ENCODE measurements at regions of chr11 and their contacts with region 1.

Region 1: DNA sequence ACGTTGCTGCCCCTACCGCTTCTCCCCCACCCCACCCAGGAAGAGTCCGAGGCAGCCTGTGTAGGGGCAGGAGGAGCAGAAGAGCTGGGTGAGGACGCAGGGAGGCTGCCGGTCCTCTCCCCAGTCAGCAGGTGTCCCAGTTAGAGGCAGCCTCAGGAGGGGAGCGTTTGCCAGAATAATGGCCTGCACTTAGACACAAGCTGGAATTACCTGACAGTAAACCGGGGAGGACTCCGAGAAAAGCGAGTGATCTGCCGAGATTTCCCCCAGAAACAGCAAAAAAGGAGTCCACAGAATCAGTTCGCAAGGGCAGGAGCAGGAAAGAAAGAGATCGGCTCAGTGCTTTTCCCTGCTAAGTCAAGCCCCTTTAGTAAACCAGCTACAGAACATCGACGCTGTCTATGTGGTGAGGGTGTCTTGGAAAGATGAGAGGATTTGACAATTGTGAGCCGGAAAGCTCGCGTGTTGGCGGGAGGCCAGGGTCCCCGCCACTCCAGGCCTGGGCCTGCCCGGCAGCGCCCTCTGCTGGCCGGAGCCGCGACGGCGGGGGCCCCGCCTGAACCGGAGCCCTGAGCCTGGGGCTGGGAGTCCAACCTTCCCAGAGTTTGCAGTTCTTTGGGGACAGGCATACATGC is 17.7 kb upstream of the THRSP start:
- DNase-seq: peak; percentile 78 to 88
- ATAC-seq: peak; percentile 89 to 96 (median 94)
- H3K4me3 ChIP-seq: peak overlapping the region in 9 of 10 donors; percentile 42 to 63 (median 58)
- H3K27ac ChIP-seq: peak overlapping the region in 9 of 10 donors; percentile 25 to 72 (median 53)
- H3K4me1 ChIP-seq: peaks cover 0 to 17% (median 8%) of the 10 kb centered on the region in 9 donors
- H3K27me3 ChIP-seq: no peaks in the 10 kb centered on the region
- CTCF ChIP-seq: peak; percentile 99

Region 2: DNA sequence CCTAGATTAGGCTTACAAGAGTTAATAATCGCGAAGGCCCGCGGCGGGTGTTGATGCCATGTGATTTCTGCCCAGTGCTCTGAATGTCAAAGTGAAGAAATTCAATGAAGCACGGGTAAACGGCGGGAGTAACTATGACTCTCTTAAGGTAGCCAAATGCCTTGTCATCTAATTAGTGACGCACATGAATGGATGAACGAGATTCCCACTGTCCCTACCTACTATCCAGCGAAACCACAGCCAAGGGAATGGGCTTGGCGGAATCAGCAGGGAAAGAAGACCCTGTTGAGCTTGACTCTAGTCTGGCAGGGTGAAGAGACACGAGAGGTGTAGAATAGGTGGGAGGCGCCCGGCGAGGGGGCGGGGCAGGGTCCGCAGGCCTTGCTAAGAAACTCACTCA is 159.6 kb before region 1 on chr11:
- intact Hi-C with region 1: no loop called
- DNase-seq: no peak
- ATAC-seq: no peak
- H3K4me3 ChIP-seq: no peak overlapping the region
- H3K27ac ChIP-seq: no peak overlapping the region
- H3K4me1 ChIP-seq: peaks cover 0 to 4% (median 0%) of the 10 kb centered on the region in 9 donors
- H3K27me3 ChIP-seq: no peaks in the 10 kb centered on the region
- CTCF ChIP-seq: no peak

Region 3: GRCh38 chr11:77994412-77995362 is 51.3 kb before region 1 on chr11 and contains the start of gene INTS4:
- intact Hi-C with region 1: loop called in 3 of 10 experiments (anchors 1 to 10 kb)
- DNase-seq: peak; percentile 99
- ATAC-seq: peak; percentile 98 to 99 (median 99)
- H3K4me3 ChIP-seq: peak within 1 kb of the TSS; percentile 52 to 79 (median 72)
- H3K27ac ChIP-seq: peak within 1 kb of the TSS in 9 of 10 donors; percentile 60 to 91 (median 86)
- H3K4me1 ChIP-seq: peaks cover 6 to 30% (median 21%) of the 10 kb centered on the region in 9 donors
- H3K27me3 ChIP-seq: no peaks in the 10 kb centered on the region
- CTCF ChIP-seq: no peak
- total RNA-seq, gene INTS4: 12.2 to 20.2 (median 16.8) TPM

Region 4: GRCh38 chr11:78000193-78000592 is 45.8 kb before region 1 on chr11:
- intact Hi-C with region 1: loop called in 4 of 10 experiments (anchors 1 to 10 kb)
- DNase-seq: peak in 1 of 2 donors; percentile 25
- ATAC-seq: peak in 7 of 8 donors; percentile 20 to 67 (median 53)
- H3K4me3 ChIP-seq: no peak overlapping the region
- H3K27ac ChIP-seq: no peak overlapping the region
- H3K4me1 ChIP-seq: peaks cover 0 to 5% (median 3%) of the 10 kb centered on the region in 9 donors
- H3K27me3 ChIP-seq: peaks cover 0 to 7% (median 0%) of the 10 kb centered on the region in 7 donors
- CTCF ChIP-seq: peak; percentile 16 to 65 (median 58)